PC-9 (cell line): ENCODE measurements at regions of chr12 and their contacts with region 1.

Region 1: DNA sequence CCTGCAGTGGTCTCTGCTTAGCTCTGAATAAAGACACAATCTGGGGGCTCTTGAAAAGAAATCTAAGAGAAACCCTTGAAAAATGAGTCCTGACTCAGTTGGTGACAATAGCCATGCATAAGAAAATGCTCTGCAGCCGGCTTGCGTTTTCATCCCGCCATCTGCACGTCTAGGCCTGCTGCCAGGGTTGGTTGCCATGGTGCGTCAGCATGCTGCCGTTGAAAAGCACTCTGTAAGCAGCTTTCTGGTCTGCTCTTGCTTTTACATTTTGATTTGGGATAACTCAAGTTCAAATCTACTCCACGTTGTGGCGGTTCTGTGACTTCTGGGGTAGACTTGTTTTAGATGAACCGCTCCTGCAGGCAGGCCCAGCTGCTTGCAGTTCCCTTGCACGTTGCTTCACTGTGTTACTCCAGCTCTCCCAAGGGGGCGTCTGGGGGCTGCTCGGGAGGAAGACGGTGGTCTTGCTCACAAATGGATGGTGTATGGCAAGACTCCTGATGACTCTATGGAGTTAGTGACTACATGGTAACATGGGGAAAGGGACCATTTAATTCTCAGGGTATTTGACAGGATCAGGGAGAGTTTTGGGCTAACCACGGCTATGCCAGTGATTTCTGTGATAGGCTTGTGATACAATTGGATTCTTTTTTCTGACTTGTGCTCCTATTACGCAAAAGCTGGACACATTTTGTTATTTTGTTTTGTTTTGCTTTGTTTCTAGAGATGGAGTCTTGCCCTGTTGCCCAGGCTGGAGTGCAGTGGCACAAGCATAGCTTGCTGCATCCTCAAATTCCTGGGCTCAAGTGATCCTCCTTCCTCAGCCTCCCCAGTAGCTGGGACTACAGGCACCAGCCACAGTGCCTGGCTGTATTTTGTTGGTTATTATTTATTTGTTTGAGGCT is 15.8 kb downstream of the WNT5B start:
- DNase-seq: no peak
- H3K4me3 ChIP-seq: no peak overlapping the region
- H3K27ac ChIP-seq: no peak overlapping the region
- H3K4me1 ChIP-seq: no peaks in the 10 kb centered on the region
- H3K27me3 ChIP-seq: peaks cover 9% of the 10 kb centered on the region; the same call in 1 of the 2 replicates
- CTCF ChIP-seq: no peak

Region 2: GRCh38 chr12:1429980-1430379 is 214.8 kb before region 1 on chr12:
- CTCF ChIA-PET with region 1: no interaction called
- POLR2A ChIA-PET with region 1: no interaction called
- intact Hi-C with region 1: no loop called
- DNase-seq: no peak
- H3K4me3 ChIP-seq: no peak overlapping the region
- H3K27ac ChIP-seq: no peak overlapping the region
- H3K4me1 ChIP-seq: no peaks in the 10 kb centered on the region
- H3K27me3 ChIP-seq: no peaks in the 10 kb centered on the region
- CTCF ChIP-seq: no peak

Region 3: DNA sequence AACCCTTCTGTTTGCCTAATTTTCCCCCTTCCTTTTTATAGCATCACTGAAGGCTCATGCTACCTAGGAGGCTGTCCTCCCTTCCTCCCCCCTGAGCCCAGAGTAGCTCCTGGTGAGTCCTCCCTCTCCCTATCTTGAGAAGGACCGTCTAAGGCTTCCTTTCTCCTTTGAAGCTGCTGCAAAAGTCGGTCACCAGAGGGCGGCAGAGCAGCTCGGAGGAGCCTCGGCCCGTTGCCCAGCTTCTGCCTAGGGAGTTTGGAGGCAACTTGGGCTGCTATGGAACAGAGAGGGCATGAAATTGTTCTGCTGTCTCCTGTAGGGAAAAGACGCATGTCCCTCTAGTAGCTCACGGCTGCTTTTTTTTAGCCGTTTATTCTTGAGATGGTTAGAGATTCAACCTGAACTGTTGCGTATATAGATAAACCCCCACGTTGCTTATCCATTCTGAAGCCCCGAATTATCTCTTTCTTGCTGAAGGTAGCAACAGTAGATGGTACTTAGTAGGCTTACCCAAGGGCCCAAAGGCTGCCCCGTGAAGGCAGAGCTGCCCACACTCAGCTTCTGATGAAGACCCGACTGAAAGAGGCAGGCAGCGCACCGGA is 10.1 kb before region 1 on chr12:
- CTCF ChIA-PET with region 1: interaction called, 10 read pairs
- POLR2A ChIA-PET with region 1: no interaction called
- intact Hi-C with region 1: no loop called
- DNase-seq: peak; percentile 50 to 63
- H3K4me3 ChIP-seq: no peak overlapping the region
- H3K27ac ChIP-seq: no peak overlapping the region
- H3K4me1 ChIP-seq: no peaks in the 10 kb centered on the region
- H3K27me3 ChIP-seq: peaks cover 52% of the 10 kb centered on the region
- CTCF ChIP-seq: peak; percentile 90

Region 4: DNA sequence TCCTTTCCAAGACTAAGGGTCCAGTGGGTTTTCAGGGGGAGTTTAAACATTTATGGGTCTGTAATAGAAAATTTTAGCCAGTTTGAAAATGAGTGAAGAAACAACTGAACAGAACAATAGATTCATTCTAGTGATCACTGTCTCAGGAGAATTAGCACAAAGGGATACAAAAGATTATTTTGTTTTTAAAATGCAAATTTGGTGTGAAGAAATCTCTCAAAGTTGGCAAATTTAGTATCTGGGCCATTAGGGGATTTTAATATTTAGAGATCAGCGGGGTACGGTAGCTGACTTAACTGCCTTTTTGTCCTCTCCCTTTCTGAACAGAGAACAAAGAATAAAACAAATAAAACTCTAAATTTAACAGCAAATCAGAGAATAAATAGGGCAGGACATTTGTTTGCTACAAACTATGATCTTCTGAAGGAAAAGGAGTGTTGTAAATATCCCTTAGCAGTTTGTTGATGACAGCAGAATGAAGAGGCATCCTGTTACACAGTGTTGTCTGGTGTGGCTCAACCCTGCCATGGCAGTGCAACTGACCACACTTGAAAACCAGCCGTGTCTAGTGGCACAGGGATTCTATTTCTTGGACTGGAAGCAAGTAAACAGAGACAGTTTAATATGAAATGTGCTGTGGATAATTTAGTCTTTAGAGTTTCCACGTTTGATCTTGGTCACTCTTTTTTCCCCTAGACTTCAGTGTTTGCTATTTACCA is 129.3 kb after region 1 on chr12:
- CTCF ChIA-PET with region 1: no interaction called
- POLR2A ChIA-PET with region 1: no interaction called
- intact Hi-C with region 1: no loop called
- DNase-seq: no peak
- H3K4me3 ChIP-seq: no peak overlapping the region
- H3K27ac ChIP-seq: no peak overlapping the region
- H3K4me1 ChIP-seq: peaks cover 42% of the 10 kb centered on the region
- H3K27me3 ChIP-seq: no peaks in the 10 kb centered on the region
- CTCF ChIP-seq: no peak